Ascending aorta (tissue), 2 donors: ENCODE measurements at regions of chr17 and their contacts with region 1.

Region 1: GRCh38 chr17:81034779-81035388 is at the start of gene BAIAP2:
- DNase-seq: peak; percentile 63 to 95
- H3K4me3 ChIP-seq: peak within 1 kb of the TSS; percentile 62 to 68
- H3K27ac ChIP-seq: no peak within 1 kb of the TSS
- H3K4me1 ChIP-seq: peaks cover 14 to 42% of the 10 kb centered on the region in 2 donors
- H3K27me3 ChIP-seq: no peaks in the 10 kb centered on the region
- CTCF ChIP-seq: no peak
- total RNA-seq, gene BAIAP2: 14.4 TPM

Region 2: GRCh38 chr17:80454557-80455335 is 580.1 kb before region 1 on chr17:
- intact Hi-C with region 1: loop called (anchors 1 kb)
- DNase-seq: peak; percentile 80 to 97
- H3K4me3 ChIP-seq: peak overlapping the region; percentile 71 to 84
- H3K27ac ChIP-seq: peak overlapping the region; percentile 96 to 100
- H3K4me1 ChIP-seq: peaks cover 4 to 17% of the 10 kb centered on the region in 2 donors
- H3K27me3 ChIP-seq: no peaks in the 10 kb centered on the region
- CTCF ChIP-seq: peak in 1 of 3 experiments; percentile 12